PC-9 (cell line): ENCODE measurements at regions of chr3 and their contacts with region 1.

Region 1: GRCh38 chr3:60582288-60582687 is 669.0 kb downstream of the FHIT start:
- DNase-seq: no peak
- H3K4me3 ChIP-seq: no peak overlapping the region
- H3K27ac ChIP-seq: no peak overlapping the region
- H3K4me1 ChIP-seq: no peaks in the 10 kb centered on the region
- H3K27me3 ChIP-seq: no peaks in the 10 kb centered on the region
- CTCF ChIP-seq: no peak

Region 2: DNA sequence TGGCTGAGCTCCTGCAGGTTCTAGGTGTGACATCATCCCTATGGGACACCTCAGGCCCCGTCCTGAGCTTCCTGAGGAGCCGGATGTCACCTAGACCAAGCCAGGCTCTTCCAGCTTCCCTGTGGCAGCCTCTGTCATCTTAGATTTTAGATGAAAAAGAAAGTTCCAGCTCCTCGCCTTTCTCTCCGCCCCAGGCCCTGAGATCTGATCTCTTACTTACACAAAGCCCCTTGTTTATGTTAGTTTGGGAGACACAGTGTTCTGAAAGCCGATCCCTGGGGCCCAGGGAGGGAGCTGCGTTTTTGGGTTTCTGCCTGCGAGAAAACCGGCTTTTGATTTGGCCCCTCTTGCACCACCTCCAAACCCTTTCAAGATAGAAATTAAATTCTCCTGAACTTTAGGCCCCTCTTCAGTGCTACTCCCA is 1964.9 kb before region 1 on chr3:
- CTCF ChIA-PET with region 1: interaction called, 11 read pairs
- POLR2A ChIA-PET with region 1: no interaction called
- intact Hi-C with region 1: no loop called
- DNase-seq: no peak
- H3K4me3 ChIP-seq: no peak overlapping the region
- H3K27ac ChIP-seq: no peak overlapping the region
- H3K4me1 ChIP-seq: no peaks in the 10 kb centered on the region
- H3K27me3 ChIP-seq: no peaks in the 10 kb centered on the region
- CTCF ChIP-seq: no peak

Region 3: DNA sequence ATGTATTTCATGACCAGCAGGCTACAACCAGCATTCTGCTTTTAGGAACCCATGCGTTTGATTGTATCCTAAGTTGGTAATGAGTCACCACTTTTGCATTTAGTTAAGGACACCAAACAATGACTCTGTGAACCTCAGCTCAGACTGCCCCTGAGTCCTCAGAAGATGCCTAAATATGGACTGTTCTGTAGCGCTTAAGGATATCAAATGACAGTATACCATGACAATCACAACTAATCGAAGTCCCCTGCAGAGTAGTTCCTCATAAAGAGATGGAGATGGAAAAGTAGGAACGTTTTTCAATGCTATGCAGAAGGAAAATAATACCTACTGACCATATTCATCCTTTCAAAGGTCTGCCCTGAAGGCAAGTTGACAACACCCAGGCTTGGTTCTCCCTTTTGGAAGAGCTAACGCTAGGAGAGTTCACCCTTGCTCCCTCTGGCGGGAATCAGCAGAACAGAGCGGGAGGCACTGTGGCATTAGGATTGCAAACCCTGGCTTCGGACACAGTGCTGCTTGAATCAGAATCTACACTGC is 160.4 kb after region 1 on chr3:
- CTCF ChIA-PET with region 1: no interaction called
- POLR2A ChIA-PET with region 1: no interaction called
- intact Hi-C with region 1: loop called (anchors 10 kb)
- DNase-seq: peak; percentile 37 to 56
- H3K4me3 ChIP-seq: no peak overlapping the region
- H3K27ac ChIP-seq: no peak overlapping the region
- H3K4me1 ChIP-seq: no peaks in the 10 kb centered on the region
- H3K27me3 ChIP-seq: no peaks in the 10 kb centered on the region
- CTCF ChIP-seq: peak; percentile 48